Activated naive CD4-positive, alpha-beta T cell treated with anti-CD3 and anti-CD28 coated beads for 36 hours (primary cell): ENCODE measurements at regions of chr5 and their contacts with region 1.

Region 1: GRCh38 chr5:59093329-59093728 is 510.5 kb downstream of the RAB3C start:
- DNase-seq: no peak
- H3K4me3 Mint-ChIP-seq: no peak overlapping the region
- H3K27ac Mint-ChIP-seq: no peak overlapping the region
- H3K4me1 Mint-ChIP-seq: peaks cover 21% of the 10 kb centered on the region
- H3K27me3 Mint-ChIP-seq: no peaks in the 10 kb centered on the region

Region 2: GRCh38 chr5:58452566-58453258 is 640.6 kb before region 1 on chr5:
- CTCF ChIA-PET with region 1: no interaction called
- intact Hi-C with region 1: no loop called
- DNase-seq: no peak
- H3K4me3 Mint-ChIP-seq: no peak overlapping the region
- H3K27ac Mint-ChIP-seq: no peak overlapping the region
- H3K4me1 Mint-ChIP-seq: no peaks in the 10 kb centered on the region
- H3K27me3 Mint-ChIP-seq: no peaks in the 10 kb centered on the region

Region 3: GRCh38 chr5:59007460-59008063 is 85.8 kb before region 1 on chr5:
- CTCF ChIA-PET with region 1: no interaction called
- intact Hi-C with region 1: no loop called
- DNase-seq: no peak
- H3K4me3 Mint-ChIP-seq: no peak overlapping the region
- H3K27ac Mint-ChIP-seq: no peak overlapping the region
- H3K4me1 Mint-ChIP-seq: peaks cover 60% of the 10 kb centered on the region
- H3K27me3 Mint-ChIP-seq: no peaks in the 10 kb centered on the region

Region 4: DNA sequence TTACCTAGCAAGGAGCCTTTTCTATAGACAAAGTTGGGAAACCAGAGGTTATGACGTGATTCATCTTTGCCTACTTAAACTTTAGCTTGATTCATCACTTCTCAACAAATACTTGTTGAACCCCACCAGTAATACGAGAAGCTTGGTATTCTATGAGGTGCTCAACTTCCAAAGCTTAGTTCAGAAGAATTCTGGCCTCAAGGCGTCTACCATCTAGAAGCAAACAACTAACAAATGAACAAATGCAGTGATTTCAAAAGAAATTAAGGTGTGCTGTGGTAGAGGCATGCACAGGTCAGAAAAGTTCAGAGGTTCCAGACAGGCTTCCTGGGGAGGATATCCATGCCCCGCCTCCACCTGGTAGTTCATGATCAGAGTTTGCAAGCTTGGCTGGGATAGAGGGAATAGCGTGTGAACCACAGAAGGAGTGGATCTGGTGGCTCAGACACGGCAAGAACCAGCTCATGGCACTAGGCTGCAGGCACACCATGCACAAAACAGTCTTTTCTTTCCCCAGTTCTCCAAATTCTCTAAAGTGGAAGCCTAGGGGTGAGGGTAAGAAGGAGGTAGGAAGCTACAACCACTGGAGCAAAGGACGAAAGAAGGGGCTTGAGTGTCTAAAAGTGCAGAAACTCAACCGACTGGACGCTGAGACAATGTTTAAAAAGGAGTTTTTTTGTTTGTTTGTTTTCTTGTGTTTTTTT is 37.4 kb before region 1 on chr5:
- CTCF ChIA-PET with region 1: no interaction called
- intact Hi-C with region 1: loop called (anchors 5 kb)
- DNase-seq: no peak
- H3K4me3 Mint-ChIP-seq: no peak overlapping the region
- H3K27ac Mint-ChIP-seq: no peak overlapping the region
- H3K4me1 Mint-ChIP-seq: no peaks in the 10 kb centered on the region
- H3K27me3 Mint-ChIP-seq: no peaks in the 10 kb centered on the region